Stomach (tissue), 19 donors: ENCODE measurements at regions of chr19 and their contacts with region 1.

Region 1: DNA sequence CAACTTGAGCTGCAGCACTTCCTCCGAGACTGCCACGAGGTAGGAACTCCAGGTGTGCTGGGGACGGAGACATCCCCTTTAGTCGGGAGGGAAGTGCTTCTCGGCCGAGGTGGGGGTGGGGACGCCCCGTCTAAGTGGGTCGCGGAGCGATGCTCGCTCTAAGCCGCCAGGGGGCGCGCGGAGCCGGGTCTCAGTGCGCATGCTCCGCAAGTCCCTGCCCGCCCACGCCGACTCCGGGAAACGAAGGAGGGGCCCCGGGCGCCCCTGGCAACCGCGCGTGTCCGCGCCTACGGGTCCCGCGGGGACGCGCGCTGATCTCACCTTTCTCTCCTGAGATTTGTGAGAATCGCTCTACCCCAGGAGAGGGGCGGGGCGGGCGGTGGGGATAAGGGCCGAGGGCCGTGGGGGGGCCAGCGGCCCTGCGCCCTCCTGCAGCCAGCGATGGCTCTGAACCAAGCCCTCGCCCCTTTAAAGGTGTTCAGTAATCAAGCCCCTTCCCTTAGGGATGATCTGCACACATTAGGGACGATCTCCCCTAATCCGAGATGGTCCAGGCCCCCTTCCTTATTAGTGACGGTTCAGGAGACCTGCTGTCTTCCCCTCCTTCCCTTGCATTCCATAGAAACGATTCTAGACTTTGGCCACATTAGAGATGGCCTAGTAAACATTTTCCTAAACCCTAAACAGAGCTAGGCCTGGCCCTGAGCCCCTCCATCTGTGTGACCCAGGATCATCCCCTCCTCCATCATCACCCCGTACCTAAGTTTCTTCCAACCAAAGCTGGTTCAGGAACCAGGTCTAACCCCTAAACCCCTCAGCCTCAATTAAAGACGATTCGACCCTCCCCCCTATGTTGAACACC is 47.3 kb upstream of the SHKBP1 start:
- DNase-seq: peak; percentile 91 to 96
- H3K4me3 ChIP-seq: peak overlapping the region; percentile 44 to 59 (median 52)
- H3K27ac ChIP-seq: peak overlapping the region; percentile 21 to 73 (median 42)
- H3K4me1 ChIP-seq: peaks cover 13 to 23% (median 20%) of the 10 kb centered on the region in 4 donors
- H3K27me3 ChIP-seq: peaks cover 0 to 13% (median 0%) of the 10 kb centered on the region in 3 donors
- CTCF ChIP-seq: peak in 5 of 7 experiments; percentile 93 to 97 (median 95)
- EP300 ChIP-seq: no peak
- POLR2A ChIP-seq: no peak

Region 2: GRCh38 chr19:40221858-40222837 is 307.2 kb before region 1 on chr19:
- intact Hi-C with region 1: no loop called
- DNase-seq: peak; percentile 77 to 93
- H3K4me3 ChIP-seq: no peak overlapping the region
- H3K27ac ChIP-seq: no peak overlapping the region
- H3K4me1 ChIP-seq: peaks cover 13 to 46% (median 35%) of the 10 kb centered on the region in 4 donors
- H3K27me3 ChIP-seq: peaks cover 18 to 97% (median 65%) of the 10 kb centered on the region in 3 donors
- CTCF ChIP-seq: peak in 5 of 7 experiments; percentile 77 to 91 (median 90)
- EP300 ChIP-seq: no peak
- POLR2A ChIP-seq: no peak

Region 3: GRCh38 chr19:40425450-40426287 is 103.7 kb before region 1 on chr19 and contains the start of gene SERTAD1:
- intact Hi-C with region 1: no loop called
- DNase-seq: peak; percentile 100
- H3K4me3 ChIP-seq: peak within 1 kb of the TSS; percentile 64 to 87 (median 76)
- H3K27ac ChIP-seq: peak within 1 kb of the TSS; percentile 97 to 100 (median 99)
- H3K4me1 ChIP-seq: peaks cover 34 to 47% (median 41%) of the 10 kb centered on the region in 4 donors
- H3K27me3 ChIP-seq: no peaks in the 10 kb centered on the region
- CTCF ChIP-seq: peak in 5 of 7 experiments; percentile 69 to 87 (median 78)
- EP300 ChIP-seq: no peak
- POLR2A ChIP-seq: peak in 2 of 4 donors; percentile 97 to 98
- total RNA-seq, gene SERTAD1: 8.6 to 16.8 (median 9.7) TPM in 4 of 5 donors, not detected in the other

Region 4: GRCh38 chr19:40592170-40592569 is 62.8 kb after region 1 on chr19:
- intact Hi-C with region 1: loop called (anchors 5 kb)
- DNase-seq: peak in 1 of 2 donors; percentile 59
- H3K4me3 ChIP-seq: no peak overlapping the region
- H3K27ac ChIP-seq: no peak overlapping the region
- H3K4me1 ChIP-seq: peaks cover 7 to 11% (median 8%) of the 10 kb centered on the region in 4 donors
- H3K27me3 ChIP-seq: peaks cover 0 to 26% (median 10%) of the 10 kb centered on the region in 3 donors
- CTCF ChIP-seq: no peak
- EP300 ChIP-seq: no peak
- POLR2A ChIP-seq: no peak

Region 5: GRCh38 chr19:40762754-40763470 is 233.6 kb after region 1 on chr19:
- intact Hi-C with region 1: no loop called
- DNase-seq: no peak
- H3K4me3 ChIP-seq: no peak overlapping the region
- H3K27ac ChIP-seq: peak overlapping the region in 1 of 5 donors; percentile 2
- H3K4me1 ChIP-seq: no peaks in the 10 kb centered on the region
- H3K27me3 ChIP-seq: no peaks in the 10 kb centered on the region
- CTCF ChIP-seq: no peak
- EP300 ChIP-seq: no peak
- POLR2A ChIP-seq: no peak